Posterior vena cava (tissue), 2 donors: ENCODE measurements at regions of chr7 and their contacts with region 1.

Region 1: DNA sequence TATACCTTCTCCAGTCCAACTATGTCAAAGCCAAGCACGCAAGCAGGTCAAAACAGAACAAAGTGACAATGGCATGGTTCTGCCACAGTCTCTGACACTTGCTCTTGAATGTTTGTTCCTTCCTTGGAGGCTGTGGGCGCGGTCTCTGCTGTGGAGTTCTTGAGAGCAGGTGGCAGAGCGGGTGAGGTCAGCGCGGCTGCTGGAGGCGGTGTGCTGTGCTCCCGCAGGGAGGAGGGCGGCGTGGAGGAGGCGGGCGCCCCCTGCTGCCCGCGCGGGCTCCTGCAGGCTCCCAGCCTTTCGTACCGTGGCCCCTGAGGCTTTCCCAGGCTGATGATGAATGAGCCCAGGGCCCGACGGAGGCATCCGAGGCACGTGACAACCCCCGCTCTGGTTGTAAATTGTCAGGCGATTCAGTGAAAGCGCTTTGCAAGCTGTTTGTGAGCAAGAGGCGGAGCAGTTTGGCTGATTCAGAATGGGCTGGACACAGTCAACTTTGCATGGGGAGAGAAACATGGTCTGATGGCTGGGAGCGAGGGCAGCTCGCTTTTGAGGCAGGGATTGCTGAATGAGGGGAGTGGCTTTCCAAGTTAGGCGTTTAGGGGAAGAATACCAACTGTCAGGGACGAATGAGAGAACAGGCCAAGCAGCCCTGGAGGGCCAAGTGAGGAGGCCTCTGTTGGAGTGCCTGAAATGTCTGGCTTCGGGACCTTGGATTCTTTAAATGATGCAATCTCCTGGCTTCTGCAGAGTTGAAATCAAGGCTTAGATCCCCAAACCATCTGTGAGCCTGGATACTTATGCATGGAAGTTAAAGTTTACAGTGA is 46.6 kb downstream of the CDHR3 start:
- DNase-seq: peak; percentile 95

Region 2: DNA sequence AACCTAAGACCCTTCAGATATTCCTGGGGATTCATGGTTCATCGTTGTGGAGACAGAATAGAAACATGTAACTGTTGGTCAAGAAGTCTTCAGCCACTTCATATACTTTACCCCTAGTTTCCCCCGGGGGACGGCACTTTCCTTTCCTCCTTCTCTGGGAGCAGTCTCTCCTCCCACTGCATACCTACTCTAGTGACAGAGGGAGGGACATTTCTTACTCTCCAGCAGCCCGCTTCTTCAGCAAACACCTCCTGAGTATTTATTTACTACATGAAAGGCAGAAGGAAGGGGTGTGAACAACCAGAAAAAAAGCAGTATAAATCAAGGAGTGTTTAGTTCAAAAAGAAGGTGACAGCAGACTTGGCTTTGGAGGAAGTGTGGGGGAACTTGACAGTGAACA is 1612.2 kb before region 1 on chr7:
- intact Hi-C with region 1: no loop called
- DNase-seq: no peak

Region 3: GRCh38 chr7:104943502-104944343 is 1065.9 kb before region 1 on chr7:
- intact Hi-C with region 1: loop called in 1 of 2 experiments (anchors 10 kb)
- DNase-seq: no peak